Naive thymus-derived CD4-positive, alpha-beta T cell (primary cell): ENCODE measurements at regions of chrX and their contacts with region 1.

Region 1: DNA sequence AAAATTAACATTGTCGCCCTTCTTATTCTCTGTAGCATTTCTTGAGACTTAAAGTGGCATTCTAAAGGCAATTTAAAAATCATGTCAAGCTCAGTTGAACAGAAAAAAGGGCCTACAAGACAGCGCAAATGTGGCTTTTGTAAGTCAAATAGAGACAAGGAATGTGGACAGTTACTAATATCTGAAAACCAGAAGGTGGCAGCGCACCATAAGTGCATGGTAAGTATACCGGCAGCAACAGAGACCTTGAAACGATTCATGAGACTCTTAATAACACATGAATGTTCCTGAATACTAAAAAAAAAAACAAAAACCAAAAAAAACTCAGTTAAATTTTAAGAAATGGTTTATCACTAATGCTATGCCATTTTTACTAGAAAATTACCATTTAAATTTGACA is 82.4 kb upstream of the HPRT1 start:
- DNase-seq: peak in 1 of 9 donors; percentile 9
- ATAC-seq: no peak
- H3K4me3 ChIP-seq: no peak overlapping the region
- H3K4me3 Mint-ChIP-seq: no peak overlapping the region
- H3K27ac ChIP-seq: no peak overlapping the region
- H3K27ac Mint-ChIP-seq: no peak overlapping the region
- H3K4me1 ChIP-seq: peaks cover 2 to 4% of the 10 kb centered on the region in 2 donors
- H3K4me1 Mint-ChIP-seq: peaks cover 3 to 24% (median 13%) of the 10 kb centered on the region in 7 donors
- H3K27me3 ChIP-seq: no peaks in the 10 kb centered on the region
- H3K27me3 Mint-ChIP-seq: no peaks in the 10 kb centered on the region

Region 2: DNA sequence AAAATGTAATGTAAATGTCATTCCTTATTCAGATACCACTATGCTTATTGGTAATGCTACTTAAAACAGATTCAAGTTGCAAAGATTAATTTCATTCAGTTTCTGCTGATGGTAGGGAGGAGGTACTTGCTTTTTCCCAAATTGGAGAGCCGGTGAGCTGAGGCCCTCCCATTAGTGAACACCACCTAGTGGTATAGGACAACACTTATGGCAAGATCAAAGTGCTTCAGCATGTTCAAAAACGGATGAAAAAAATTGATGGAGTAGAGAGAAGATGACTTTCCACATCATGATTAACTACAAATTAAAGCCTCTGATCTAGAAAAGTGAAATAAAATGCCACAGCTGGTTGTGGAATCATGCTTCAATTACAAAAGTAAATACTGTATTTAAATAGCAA is 2001.6 kb before region 1 on chrX:
- CTCF ChIA-PET with region 1: no interaction called
- POLR2A ChIA-PET with region 1: no interaction called
- intact Hi-C with region 1: no loop called
- DNase-seq: no peak
- ATAC-seq: no peak
- H3K4me3 ChIP-seq: no peak overlapping the region
- H3K4me3 Mint-ChIP-seq: no peak overlapping the region
- H3K27ac ChIP-seq: no peak overlapping the region
- H3K27ac Mint-ChIP-seq: no peak overlapping the region
- H3K4me1 ChIP-seq: no peaks in the 10 kb centered on the region
- H3K4me1 Mint-ChIP-seq: no peaks in the 10 kb centered on the region
- H3K27me3 ChIP-seq: no peaks in the 10 kb centered on the region
- H3K27me3 Mint-ChIP-seq: no peaks in the 10 kb centered on the region

Region 3: DNA sequence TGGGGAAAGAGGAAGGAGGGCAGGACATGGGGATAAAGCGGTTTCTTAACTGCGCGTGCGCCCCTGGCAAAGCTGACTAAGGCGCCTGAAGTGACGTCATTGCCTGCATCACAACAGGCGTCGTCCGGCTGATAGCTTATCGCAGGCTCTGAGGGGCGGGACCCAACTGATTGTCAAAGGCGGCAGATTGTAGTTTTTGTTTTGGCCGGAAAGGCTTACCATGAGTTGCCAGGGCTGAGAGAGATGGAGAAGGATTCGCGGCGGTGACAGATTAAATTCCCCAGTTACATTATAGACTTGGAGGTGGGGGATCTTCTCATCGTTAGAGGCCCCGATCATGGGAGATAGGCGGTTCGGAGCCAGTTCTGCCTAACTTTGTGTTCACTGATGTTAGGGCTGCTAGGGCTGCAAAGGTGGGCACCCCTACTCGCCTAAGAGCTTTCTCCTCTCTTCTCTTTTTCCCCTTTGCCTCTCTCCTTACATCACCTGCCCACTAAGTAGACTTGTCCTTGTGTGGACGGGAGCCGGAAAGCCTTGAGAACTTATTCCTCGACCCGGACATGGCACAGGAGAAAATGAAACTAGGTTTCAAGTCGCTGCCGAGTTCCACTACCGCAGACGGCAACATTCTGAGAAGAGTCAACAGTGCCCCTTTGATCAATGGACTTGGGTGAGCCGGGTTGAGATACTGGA is 429.6 kb after region 1 on chrX:
- CTCF ChIA-PET with region 1: no interaction called
- POLR2A ChIA-PET with region 1: no interaction called
- intact Hi-C with region 1: loop called in 1 of 2 experiments (anchors 5 kb)
- DNase-seq: peak; percentile 56 to 91 (median 85)
- ATAC-seq: peak; percentile 93
- H3K4me3 ChIP-seq: peak overlapping the region; percentile 79
- H3K4me3 Mint-ChIP-seq: peak overlapping the region; percentile 89 to 99 (median 95)
- H3K27ac ChIP-seq: peak overlapping the region; percentile 94
- H3K27ac Mint-ChIP-seq: peak overlapping the region; percentile 87 to 100 (median 97)
- H3K4me1 ChIP-seq: peaks cover 4% of the 10 kb centered on the region in 2 donors
- H3K4me1 Mint-ChIP-seq: peaks cover 8 to 39% (median 27%) of the 10 kb centered on the region in 7 donors
- H3K27me3 ChIP-seq: no peaks in the 10 kb centered on the region
- H3K27me3 Mint-ChIP-seq: peaks cover 0 to 2% (median 0%) of the 10 kb centered on the region in 5 donors